Activated T-helper 1 cell treated with anti-CD3 and anti-CD28 coated beads, Interleukin-12 subunit alpha, Interleukin-12 subunit beta, Interleukin-2, Interleukin-4 antibody, amounts not matched to agents 30 ng/mL and 10 ng/mL and 1 ng/mL, durations not matched to agents 14 hours and 24 hours and 36 hours (primary cell): ENCODE measurements at regions of chr22 and their contacts with region 1.

Region 1: DNA sequence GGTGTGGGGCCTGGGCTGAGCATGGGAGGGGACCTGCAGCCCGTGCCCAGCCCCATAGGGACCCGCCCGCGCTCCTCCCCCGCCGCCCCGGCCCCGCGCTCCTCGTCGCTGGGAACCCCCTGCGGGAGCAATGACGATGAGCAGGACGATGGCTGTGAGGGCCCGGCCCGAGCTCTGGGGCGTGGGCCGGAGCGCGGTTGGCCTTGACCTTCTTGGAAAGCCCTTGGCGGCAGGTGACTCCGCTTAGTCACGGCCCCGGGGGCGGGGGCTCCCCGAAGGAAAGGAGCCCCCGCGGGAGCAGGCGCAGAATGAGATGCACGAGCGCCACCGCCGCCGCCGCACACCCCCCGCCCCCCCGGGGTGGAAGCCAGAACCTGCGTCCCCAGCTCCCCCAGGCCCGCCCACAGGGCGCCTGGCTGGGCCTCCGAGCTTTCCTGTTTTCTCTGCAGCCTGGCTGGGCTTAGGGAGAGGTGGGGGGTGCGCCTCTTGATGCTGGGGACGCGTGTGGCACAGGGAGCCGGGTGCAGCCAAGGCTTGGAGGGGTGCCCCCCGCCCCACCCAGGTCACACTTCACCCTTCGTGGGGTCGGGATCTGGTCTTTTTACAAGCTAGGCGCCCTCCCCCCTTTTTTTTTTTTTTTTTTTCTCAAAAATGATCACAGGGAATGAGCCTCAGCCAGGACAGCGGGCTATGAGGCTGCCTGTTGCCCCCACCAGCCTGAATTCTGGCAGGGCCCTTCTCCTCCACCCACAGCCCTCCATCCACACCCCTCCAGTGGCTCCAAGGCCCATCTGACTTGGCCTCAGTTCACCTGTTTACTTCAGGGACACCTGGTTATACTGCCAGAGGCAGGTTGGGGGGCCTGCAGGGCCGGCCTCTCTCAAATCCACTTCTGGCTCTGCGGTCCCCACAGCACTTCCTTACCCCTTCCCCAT is 17.9 kb downstream of the CRELD2 start:
- DNase-seq: peak; percentile 91
- H3K4me3 Mint-ChIP-seq: peak overlapping the region; percentile 71
- H3K27ac Mint-ChIP-seq: peak overlapping the region; percentile 79
- H3K4me1 Mint-ChIP-seq: peaks cover 7% of the 10 kb centered on the region
- H3K27me3 Mint-ChIP-seq: no peaks in the 10 kb centered on the region

Region 2: GRCh38 chr22:49760630-49761571 is 175.4 kb before region 1 on chr22:
- intact Hi-C with region 1: no loop called
- DNase-seq: no peak
- H3K4me3 Mint-ChIP-seq: no peak overlapping the region
- H3K27ac Mint-ChIP-seq: no peak overlapping the region
- H3K4me1 Mint-ChIP-seq: peaks cover 21% of the 10 kb centered on the region
- H3K27me3 Mint-ChIP-seq: peaks cover 6% of the 10 kb centered on the region

Region 3: DNA sequence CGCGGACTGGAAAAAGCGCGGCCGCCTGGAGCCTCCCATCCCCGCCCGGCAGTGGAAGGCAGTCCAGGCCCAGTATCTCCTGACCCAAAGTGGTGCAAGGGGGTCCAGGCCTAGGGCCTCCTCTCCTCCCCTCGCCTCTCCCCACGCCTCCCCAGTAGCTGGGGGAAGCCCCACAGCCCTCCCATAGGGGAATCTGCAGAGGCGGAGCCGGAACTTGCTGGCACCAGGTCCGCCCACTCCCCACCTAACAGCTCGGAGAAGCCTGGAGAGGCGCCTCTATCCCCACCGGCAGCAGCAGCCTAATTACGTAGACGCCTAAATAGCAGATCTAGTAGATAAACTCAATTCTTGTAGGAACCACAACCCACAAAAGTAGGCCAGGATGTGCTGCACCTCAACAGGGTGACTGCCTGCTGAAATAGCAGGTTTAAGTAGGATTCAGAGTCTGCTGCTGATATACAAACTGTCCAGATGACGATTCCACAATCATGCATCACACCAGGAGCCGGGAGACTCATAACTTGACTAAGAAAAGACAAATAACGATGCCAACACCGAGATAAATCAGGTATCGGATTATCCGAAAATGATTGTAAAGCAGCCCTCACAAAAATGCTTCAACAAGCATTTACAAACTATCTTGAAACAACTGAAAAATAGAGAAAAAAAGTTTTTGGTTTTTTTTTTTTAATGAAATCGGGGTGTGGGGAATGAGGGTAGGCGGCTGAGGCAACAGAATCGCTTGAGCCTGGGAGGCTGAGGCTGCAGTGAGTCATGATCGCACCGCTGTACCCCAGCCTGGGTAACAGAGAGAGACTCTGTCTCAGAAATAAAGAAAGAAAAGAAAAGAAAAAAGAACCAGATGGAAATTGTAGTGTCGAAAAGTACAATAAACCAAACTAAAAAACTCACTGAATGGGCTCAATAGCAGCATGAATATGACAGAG is 97.2 kb before region 1 on chr22:
- intact Hi-C with region 1: loop called (anchors 1 kb)
- DNase-seq: peak; percentile 85
- H3K4me3 Mint-ChIP-seq: peak overlapping the region; percentile 68
- H3K27ac Mint-ChIP-seq: peak overlapping the region; percentile 87
- H3K4me1 Mint-ChIP-seq: peaks cover 28% of the 10 kb centered on the region
- H3K27me3 Mint-ChIP-seq: peaks cover 4% of the 10 kb centered on the region

Region 4: DNA sequence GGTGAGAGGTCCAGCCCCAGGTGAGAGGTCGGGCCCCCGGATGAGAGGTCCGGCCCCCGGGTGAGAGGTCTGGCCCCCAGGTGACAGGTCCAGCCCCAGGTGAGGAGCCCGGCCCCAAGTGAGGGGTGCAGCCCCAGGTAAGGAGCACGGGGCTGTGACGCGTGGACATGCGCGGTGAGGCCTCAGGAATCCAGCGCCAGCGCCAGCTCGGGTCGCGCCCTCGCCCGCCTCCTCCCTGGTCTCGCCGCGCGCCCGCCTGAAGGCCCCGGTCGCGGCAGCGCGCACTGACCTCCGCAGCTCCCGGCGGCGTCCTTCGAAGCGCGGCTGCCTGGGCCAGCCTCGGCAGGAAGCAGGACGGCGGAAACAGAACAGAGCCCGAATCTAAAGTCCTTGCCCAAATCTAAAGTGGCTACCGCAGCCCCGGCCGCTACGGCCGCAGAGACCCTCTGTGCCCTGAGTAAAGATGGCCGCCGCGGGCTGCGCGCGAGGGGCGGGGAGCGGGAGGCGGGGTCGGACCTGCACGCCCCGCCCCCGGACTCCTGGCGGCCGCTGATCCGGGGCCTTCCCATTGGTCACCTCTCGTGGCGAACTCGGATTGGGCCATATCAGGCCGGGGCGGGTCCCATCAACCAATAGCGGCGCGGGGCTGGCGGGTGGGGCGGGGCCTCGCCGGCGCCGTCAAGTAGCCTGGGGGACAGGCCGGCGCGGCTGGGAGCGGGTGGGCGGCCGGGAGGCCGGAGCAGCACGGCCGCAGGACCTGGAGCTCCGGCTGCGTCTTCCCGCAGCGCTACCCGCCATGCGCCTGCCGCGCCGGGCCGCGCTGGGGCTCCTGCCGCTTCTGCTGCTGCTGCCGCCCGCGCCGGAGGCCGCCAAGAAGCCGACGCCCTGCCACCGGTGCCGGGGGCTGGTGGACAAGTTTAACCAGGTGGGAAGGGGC is 18.0 kb before region 1 on chr22 and contains the starts of genes ALG12 and CRELD2:
- intact Hi-C with region 1: loop called (anchors 1 kb)
- DNase-seq: peak; percentile 96
- H3K4me3 Mint-ChIP-seq: peak within 1 kb of the TSS; percentile 89
- H3K27ac Mint-ChIP-seq: peak within 1 kb of the TSS; percentile 87
- H3K4me1 Mint-ChIP-seq: peaks cover 16% of the 10 kb centered on the region
- H3K27me3 Mint-ChIP-seq: no peaks in the 10 kb centered on the region
- total RNA-seq, gene ALG12: 13.1 and 18.5 TPM in 2 replicates
- total RNA-seq, gene CRELD2: 48.1 and 51.0 TPM in 2 replicates

Region 5: DNA sequence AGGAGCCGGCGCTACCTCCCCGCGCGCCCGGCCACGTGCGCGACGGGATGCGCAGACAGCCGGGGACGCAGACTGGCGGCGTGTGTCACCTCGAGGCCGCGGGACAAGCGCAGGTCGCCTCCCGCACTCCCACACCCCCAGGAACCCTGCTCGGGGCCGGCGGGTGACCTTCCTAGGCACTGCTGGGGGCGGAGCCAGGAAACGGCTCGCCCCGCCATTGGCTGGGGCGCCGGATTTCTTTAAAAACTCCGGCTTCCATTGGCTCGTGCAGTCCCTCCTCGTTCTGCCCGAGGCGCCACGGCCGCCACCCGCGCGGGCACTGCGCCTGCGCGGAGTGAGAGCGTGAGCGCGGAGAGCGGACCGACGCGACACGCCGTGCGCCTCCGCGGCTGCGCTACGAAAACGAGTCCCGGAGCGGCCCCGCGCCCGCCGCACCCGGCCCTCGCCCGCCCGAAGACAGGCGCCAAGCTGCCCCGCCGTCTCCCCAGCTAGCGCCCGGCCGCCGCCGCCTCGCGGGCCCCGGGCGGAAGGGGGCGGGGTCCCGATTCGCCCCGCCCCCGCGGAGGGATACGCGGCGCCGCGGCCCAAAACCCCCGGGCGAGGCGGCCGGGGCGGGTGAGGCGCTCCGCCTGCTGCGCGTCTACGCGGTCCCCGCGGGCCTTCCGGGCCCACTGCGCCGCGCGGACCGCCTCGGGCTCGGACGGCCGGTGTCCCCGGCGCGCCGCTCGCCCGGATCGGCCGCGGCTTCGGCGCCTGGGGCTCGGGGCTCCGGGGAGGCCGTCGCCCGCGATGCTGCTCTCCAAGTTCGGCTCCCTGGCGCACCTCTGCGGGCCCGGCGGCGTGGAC is 24.1 kb after region 1 on chr22 and contains the start of gene PIM3:
- intact Hi-C with region 1: loop called (anchors 1 kb)
- DNase-seq: peak; percentile 93
- H3K4me3 Mint-ChIP-seq: peak within 1 kb of the TSS; percentile 90
- H3K27ac Mint-ChIP-seq: peak within 1 kb of the TSS; percentile 95
- H3K4me1 Mint-ChIP-seq: peaks cover 26% of the 10 kb centered on the region
- H3K27me3 Mint-ChIP-seq: no peaks in the 10 kb centered on the region
- total RNA-seq, gene PIM3: 290 and 291 TPM in 2 replicates

Region 6: GRCh38 chr22:49970528-49971231 is 34.4 kb after region 1 on chr22:
- intact Hi-C with region 1: loop called (anchors 2 kb)
- DNase-seq: peak; percentile 88
- H3K4me3 Mint-ChIP-seq: peak overlapping the region; percentile 81
- H3K27ac Mint-ChIP-seq: peak overlapping the region; percentile 92
- H3K4me1 Mint-ChIP-seq: peaks cover 29% of the 10 kb centered on the region
- H3K27me3 Mint-ChIP-seq: no peaks in the 10 kb centered on the region

Region 7: DNA sequence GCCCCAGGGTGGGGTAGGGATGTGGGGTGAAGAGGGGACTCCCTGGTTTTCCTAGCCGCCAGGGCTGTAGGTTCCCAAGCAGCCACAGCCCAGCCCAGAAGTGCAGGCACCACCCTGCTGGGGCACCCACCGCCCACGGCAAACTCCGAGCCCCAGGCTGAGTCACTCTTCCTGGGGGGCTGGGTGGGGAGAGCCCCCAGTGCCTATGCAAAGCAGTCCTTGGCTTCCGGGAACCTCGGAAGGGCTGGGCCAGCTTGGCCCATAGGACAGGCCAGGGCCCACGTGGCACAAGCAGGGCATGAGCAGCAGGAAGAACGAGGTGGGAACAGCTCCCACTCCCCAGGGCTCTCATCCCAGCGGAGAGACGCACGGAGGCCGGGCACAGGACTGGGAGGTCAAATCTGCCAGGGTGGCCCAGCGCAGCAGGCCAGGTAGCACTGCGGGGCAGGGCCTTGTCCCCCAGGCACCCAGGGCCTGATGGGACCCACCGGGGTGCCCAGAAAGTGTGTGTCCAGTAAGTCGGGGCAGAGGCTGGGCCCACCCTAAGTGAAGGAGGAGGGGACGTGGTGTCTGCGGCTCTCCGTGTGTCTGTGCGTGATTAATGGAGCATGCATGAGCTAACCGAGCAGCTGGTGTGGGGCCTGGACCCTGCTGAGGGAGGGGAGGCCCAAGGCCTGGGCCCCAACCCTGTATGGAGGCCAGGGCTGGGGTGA is 80.9 kb after region 1 on chr22:
- intact Hi-C with region 1: loop called (anchors 1 kb)
- DNase-seq: no peak
- H3K4me3 Mint-ChIP-seq: peak overlapping the region; percentile 19
- H3K27ac Mint-ChIP-seq: peak overlapping the region; percentile 45
- H3K4me1 Mint-ChIP-seq: peaks cover 9% of the 10 kb centered on the region
- H3K27me3 Mint-ChIP-seq: peaks cover 2% of the 10 kb centered on the region